ENCODE measurements at regions of chr3 and their contacts with region 1.

Region 1: DNA sequence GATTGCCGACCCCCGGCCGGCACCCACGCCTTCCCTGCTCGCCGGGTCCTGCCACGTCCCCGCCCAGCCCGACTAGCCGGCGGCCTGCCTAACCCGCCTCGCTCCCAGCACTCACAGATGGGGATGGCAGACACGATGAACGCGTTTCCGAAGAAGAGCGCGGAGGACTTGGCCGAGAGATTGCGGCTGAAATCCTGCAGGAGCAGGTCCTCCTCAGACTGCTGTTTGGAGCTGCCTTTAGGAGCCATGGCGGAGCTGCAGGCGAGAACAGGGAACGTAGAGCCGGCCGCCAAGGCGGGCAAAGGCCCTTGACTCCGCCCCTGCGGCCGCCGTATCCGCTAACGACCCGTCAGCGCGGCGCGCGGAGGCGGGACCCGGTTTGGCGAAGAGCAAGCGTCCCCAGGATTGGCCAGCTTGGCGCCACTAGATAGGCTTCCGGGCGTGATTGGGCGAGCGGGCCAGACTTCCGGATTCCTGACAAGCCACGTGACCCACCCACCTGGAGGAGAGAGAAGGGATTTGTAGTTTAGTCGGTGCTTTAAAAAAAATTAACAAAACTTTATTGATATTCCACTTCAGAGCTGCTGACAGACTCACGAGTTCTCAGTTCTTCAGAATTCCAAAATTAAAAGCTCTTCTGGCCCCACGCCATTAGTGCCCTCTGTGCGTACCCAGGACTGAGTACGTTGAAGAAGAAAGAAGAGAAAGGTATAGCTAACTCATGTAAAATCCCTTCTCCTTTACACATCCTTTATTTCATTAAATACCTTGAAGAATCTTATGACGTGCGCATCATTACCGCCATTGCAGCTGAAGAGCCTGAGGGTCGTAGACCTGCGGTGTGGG is at the start of gene SSR3:
- DNase-seq: peak; percentile 99
- ATAC-seq: peak; percentile 99
- H3K4me3 ChIP-seq: peak within 1 kb of the TSS; percentile 83 to 97 (median 90)
- H3K4me3 Mint-ChIP-seq: peak within 1 kb of the TSS; percentile 97
- H3K27ac ChIP-seq: peak within 1 kb of the TSS; percentile 19 to 86
- H3K27ac Mint-ChIP-seq: peak within 1 kb of the TSS; percentile 94
- H3K4me1 ChIP-seq: peaks cover 14 to 16% of the 10 kb centered on the region in 2 donors
- H3K4me1 Mint-ChIP-seq: peaks cover 38% of the 10 kb centered on the region
- H3K27me3 ChIP-seq: no peaks in the 10 kb centered on the region
- H3K27me3 Mint-ChIP-seq: no peaks in the 10 kb centered on the region
- CTCF ChIP-seq: no peak
- total RNA-seq, gene SSR3: 63.1 and 69.2 TPM in 2 replicates

Region 2: GRCh38 chr3:155870133-155870944 is 684.7 kb before region 1 on chr3 and contains the start of gene GMPS:
- CTCF ChIA-PET with region 1: no interaction called
- POLR2A ChIA-PET with region 1: interaction called, 4 read pairs
- intact Hi-C with region 1: loop called (anchors 5 kb)
- DNase-seq: peak; percentile 96
- ATAC-seq: peak; percentile 95
- H3K4me3 ChIP-seq: peak within 1 kb of the TSS; percentile 65 to 95 (median 93)
- H3K4me3 Mint-ChIP-seq: peak within 1 kb of the TSS; percentile 96
- H3K27ac ChIP-seq: peak within 1 kb of the TSS; percentile 75 to 86
- H3K27ac Mint-ChIP-seq: peak within 1 kb of the TSS; percentile 94
- H3K4me1 ChIP-seq: peaks cover 14 to 19% of the 10 kb centered on the region in 2 donors
- H3K4me1 Mint-ChIP-seq: peaks cover 23% of the 10 kb centered on the region
- H3K27me3 ChIP-seq: no peaks in the 10 kb centered on the region
- H3K27me3 Mint-ChIP-seq: no peaks in the 10 kb centered on the region
- CTCF ChIP-seq: peak; percentile 45
- total RNA-seq, gene GMPS: 28.0 and 30.8 TPM in 2 replicates

Region 3: GRCh38 chr3:156542715-156543555 is 12.1 kb before region 1 on chr3:
- CTCF ChIA-PET with region 1: interaction called, 12 read pairs
- POLR2A ChIA-PET with region 1: no interaction called
- intact Hi-C with region 1: loop called (anchors 1 kb)
- DNase-seq: no peak
- ATAC-seq: no peak
- H3K4me3 ChIP-seq: no peak overlapping the region
- H3K4me3 Mint-ChIP-seq: no peak overlapping the region
- H3K27ac ChIP-seq: no peak overlapping the region
- H3K27ac Mint-ChIP-seq: no peak overlapping the region
- H3K4me1 ChIP-seq: no peaks in the 10 kb centered on the region
- H3K4me1 Mint-ChIP-seq: no peaks in the 10 kb centered on the region
- H3K27me3 ChIP-seq: no peaks in the 10 kb centered on the region
- H3K27me3 Mint-ChIP-seq: no peaks in the 10 kb centered on the region
- CTCF ChIP-seq: no peak

Region 4: DNA sequence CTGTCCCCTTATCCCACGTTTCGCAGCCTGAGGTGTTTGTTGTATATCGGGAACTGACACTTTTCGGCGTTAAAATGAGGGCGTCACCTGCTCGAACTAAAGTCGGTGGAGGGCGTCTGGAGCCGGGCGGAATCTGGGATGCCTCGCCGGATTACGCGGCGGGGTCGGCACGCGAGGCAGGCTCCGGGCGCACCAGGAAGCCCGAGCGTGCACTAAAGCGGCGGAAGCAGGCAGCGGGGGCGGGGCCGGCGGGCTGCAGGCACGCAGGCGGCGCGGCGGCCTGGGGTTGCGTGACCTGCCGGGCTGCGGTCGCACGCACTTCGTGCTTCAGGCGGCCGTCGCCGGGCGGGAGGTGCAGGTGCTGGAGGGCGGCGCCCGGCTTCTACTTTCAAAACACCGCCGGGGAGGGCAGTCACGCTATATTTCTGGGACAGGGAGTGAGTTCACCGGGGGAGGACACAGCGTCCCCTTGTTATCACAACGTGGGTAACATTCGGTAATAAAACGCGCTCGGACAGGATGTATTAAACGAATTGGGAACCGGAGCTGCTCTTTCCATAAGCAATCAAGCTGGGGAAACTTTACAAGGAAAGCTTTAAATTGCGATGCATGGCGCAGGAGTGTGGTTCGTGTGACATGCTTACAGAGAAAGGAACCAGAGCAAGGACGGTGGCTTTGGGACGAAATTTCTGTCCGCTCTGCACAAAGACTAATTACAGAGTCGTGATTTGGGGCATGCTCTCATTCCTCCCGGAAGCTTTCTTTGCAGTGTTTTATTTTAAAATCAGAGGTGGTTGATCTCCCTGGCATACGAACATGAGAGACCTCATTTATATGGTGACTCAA is 262.0 kb after region 1 on chr3:
- CTCF ChIA-PET with region 1: no interaction called
- POLR2A ChIA-PET with region 1: interaction called, 3 read pairs
- intact Hi-C with region 1: loop called (anchors 1 kb)
- DNase-seq: peak; percentile 94
- ATAC-seq: peak; percentile 85
- H3K4me3 ChIP-seq: peak overlapping the region; percentile 42 to 86 (median 77)
- H3K4me3 Mint-ChIP-seq: peak overlapping the region; percentile 97
- H3K27ac ChIP-seq: peak overlapping the region; percentile 56 to 80
- H3K27ac Mint-ChIP-seq: peak overlapping the region; percentile 99
- H3K4me1 ChIP-seq: peaks cover 13 to 16% of the 10 kb centered on the region in 2 donors
- H3K4me1 Mint-ChIP-seq: peaks cover 43% of the 10 kb centered on the region
- H3K27me3 ChIP-seq: no peaks in the 10 kb centered on the region
- H3K27me3 Mint-ChIP-seq: no peaks in the 10 kb centered on the region
- CTCF ChIP-seq: no peak

Region 5: GRCh38 chr3:157081681-157082210 is 526.7 kb after region 1 on chr3:
- CTCF ChIA-PET with region 1: interaction called, 19 read pairs
- POLR2A ChIA-PET with region 1: no interaction called
- intact Hi-C with region 1: loop called (anchors 2 kb)
- DNase-seq: peak; percentile 86
- ATAC-seq: peak; percentile 99
- H3K4me3 ChIP-seq: no peak overlapping the region
- H3K4me3 Mint-ChIP-seq: peak overlapping the region; percentile 2
- H3K27ac ChIP-seq: no peak overlapping the region
- H3K27ac Mint-ChIP-seq: peak overlapping the region; percentile 63
- H3K4me1 ChIP-seq: peaks cover 9 to 11% of the 10 kb centered on the region in 2 donors
- H3K4me1 Mint-ChIP-seq: peaks cover 11% of the 10 kb centered on the region
- H3K27me3 ChIP-seq: peaks cover 0 to 4% (median 0%) of the 10 kb centered on the region in 4 experiments
- H3K27me3 Mint-ChIP-seq: peaks cover 8% of the 10 kb centered on the region
- CTCF ChIP-seq: peak; percentile 96

Region 6: DNA sequence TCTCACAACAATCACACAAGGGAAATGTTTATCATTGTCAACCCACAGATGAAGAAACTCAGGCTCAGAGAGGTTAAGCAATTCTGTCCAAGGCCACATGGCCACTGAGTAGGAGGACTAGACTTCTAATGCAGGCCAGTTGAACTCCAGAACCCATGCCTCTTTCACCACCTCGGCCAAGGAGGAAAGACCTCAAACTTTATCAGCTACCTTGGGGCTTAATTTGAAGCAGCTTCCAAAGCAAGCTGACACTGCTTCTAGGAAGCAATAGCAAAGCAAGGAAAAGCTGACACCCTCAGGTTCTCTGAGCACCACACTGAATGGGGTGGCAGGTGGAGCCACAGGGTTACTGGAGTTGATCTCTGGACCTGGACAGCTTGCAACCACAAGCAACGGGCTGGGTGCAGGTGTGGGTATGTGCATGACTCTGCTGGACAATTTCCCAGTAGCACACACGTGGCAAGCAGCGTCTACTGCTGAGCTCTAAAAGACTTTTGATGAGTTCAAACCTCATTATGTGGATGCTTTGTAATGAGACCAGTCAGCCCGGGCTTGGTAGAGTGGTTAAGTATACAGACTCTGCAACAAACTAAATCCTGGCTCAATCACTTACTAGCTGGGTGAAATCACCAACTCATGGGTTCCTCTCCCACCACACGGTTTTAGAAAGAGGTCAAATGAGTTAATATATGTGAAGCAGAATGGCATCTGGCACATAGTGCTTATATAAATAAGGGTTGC is 581.8 kb after region 1 on chr3:
- CTCF ChIA-PET with region 1: interaction called, 9 read pairs
- POLR2A ChIA-PET with region 1: no interaction called
- intact Hi-C with region 1: loop called (anchors 2 kb)
- DNase-seq: no peak
- ATAC-seq: no peak
- H3K4me3 ChIP-seq: no peak overlapping the region
- H3K4me3 Mint-ChIP-seq: no peak overlapping the region
- H3K27ac ChIP-seq: peak overlapping the region in 1 of 2 donors; percentile 14
- H3K27ac Mint-ChIP-seq: no peak overlapping the region
- H3K4me1 ChIP-seq: peaks cover 4 to 7% of the 10 kb centered on the region in 2 donors
- H3K4me1 Mint-ChIP-seq: peaks cover 6% of the 10 kb centered on the region
- H3K27me3 ChIP-seq: no peaks in the 10 kb centered on the region
- H3K27me3 Mint-ChIP-seq: no peaks in the 10 kb centered on the region
- CTCF ChIP-seq: no peak

Region 7: GRCh38 chr3:157174649-157175498 is 619.8 kb after region 1 on chr3:
- CTCF ChIA-PET with region 1: no interaction called
- POLR2A ChIA-PET with region 1: interaction called, 8 read pairs
- intact Hi-C with region 1: loop called (anchors 1 kb)
- DNase-seq: peak; percentile 99
- ATAC-seq: peak; percentile 91
- H3K4me3 ChIP-seq: peak overlapping the region; percentile 85 to 98 (median 93)
- H3K4me3 Mint-ChIP-seq: peak overlapping the region; percentile 91
- H3K27ac ChIP-seq: peak overlapping the region; percentile 89 to 97
- H3K27ac Mint-ChIP-seq: peak overlapping the region; percentile 97
- H3K4me1 ChIP-seq: peaks cover 19% of the 10 kb centered on the region in 2 donors
- H3K4me1 Mint-ChIP-seq: peaks cover 23% of the 10 kb centered on the region
- H3K27me3 ChIP-seq: no peaks in the 10 kb centered on the region
- H3K27me3 Mint-ChIP-seq: no peaks in the 10 kb centered on the region
- CTCF ChIP-seq: no peak